Activated T-helper 1 cell treated with anti-CD3 and anti-CD28 coated beads, Interleukin-12 subunit alpha, Interleukin-12 subunit beta, Interleukin-2, Interleukin-4 antibody, amounts not matched to agents 30 ng/mL and 10 ng/mL and 1 ng/mL, durations not matched to agents 14 hours and 24 hours and 36 hours (primary cell): ENCODE measurements at regions of chr1 and their contacts with region 1.

Region 1: DNA sequence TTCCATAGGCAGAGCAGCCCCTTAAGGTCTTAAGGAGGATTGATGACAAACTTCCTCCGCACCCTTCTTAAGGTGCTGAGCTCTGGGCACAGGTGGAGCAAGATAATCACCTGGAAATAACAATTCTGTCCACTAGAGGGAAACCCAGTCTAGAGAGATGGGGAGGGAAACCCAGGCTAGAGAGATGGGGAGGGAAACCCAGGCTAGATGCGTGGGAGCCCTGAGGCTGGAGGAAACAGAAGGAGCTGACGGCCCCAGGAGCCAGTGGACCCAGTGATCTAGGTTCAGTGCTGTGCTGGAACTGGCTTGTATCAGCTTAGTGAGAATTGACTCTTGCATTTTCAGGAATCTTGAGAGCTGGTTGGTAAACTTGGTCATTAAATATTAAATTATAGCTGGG is 17.8 kb upstream of the MYCL start:
- DNase-seq: peak; percentile 32
- H3K4me3 Mint-ChIP-seq: no peak overlapping the region
- H3K27ac Mint-ChIP-seq: no peak overlapping the region
- H3K4me1 Mint-ChIP-seq: no peaks in the 10 kb centered on the region
- H3K27me3 Mint-ChIP-seq: peaks cover 9% of the 10 kb centered on the region

Region 2: DNA sequence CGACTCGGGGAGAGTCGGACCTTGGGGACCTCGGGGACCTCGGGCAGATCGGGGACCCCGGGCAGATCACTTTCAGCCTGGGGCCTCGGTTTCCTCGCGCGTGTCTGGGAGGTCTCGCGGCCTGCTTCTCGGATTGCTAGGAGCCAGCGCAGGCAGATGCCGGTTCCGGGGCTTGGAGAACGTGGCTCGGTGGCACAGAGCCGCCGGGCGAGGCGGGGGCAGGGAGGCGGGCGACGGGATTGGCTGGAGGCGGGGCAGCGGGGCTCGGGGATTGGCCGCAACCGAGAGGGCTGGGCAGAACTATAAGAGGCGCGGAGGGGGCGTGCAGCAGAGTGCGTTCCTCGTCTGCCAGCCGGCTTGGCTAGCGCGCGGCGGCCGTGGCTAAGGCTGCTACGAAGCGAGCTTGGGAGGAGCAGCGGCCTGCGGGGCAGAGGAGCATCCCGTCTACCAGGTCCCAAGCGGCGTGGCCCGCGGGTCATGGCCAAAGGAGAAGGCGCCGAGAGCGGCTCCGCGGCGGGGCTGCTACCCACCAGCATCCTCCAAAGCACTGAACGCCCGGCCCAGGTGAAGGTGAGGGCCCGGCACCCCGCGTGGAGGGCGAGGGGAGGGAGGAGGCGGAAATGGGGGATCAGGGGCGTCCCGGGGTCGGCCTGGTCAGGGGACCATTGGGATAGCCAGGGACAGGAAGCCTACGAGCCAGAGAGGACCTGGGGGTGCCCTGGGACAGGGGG is 35.4 kb after region 1 on chr1 and contains the start of gene MFSD2A:
- intact Hi-C with region 1: loop called (anchors 1 kb)
- DNase-seq: peak; percentile 80
- H3K4me3 Mint-ChIP-seq: peak within 1 kb of the TSS; percentile 98
- H3K27ac Mint-ChIP-seq: peak within 1 kb of the TSS; percentile 94
- H3K4me1 Mint-ChIP-seq: peaks cover 49% of the 10 kb centered on the region
- H3K27me3 Mint-ChIP-seq: no peaks in the 10 kb centered on the region
- total RNA-seq, gene MFSD2A: 55.3 and 56.2 TPM in 2 replicates

Region 3: DNA sequence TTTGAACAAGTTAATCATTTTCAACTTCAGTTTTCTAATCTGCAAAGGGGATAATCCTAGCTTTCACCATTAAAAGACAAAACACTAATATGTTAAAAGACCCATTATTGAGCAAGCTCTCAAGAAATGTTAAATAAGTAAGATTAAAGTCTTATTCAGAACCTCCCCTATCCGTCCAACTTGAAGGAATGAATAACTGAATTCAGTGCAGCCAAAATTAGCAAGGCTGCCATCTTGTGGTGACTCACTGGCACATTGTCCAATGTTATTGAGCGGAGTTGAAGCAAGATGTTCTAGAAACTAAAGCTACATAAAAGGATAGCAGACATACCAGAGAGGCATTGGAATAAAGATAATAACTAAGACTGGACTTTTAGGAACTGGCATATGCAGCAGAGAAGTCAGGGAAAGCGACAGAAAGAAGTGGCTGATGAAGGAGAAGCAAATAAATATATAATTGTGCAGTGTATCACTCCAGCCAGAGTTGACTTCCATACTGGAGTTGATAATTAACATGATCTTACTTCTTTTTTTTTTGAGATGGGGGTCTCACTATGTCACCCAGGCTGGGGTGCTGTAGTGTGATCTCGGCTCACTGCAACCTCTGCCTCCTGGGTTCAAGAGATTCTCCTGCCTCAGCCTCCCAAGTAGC is 112.8 kb after region 1 on chr1:
- intact Hi-C with region 1: loop called (anchors 1 kb)
- DNase-seq: peak; percentile 24
- H3K4me3 Mint-ChIP-seq: no peak overlapping the region
- H3K27ac Mint-ChIP-seq: no peak overlapping the region
- H3K4me1 Mint-ChIP-seq: peaks cover 36% of the 10 kb centered on the region
- H3K27me3 Mint-ChIP-seq: peaks cover 7% of the 10 kb centered on the region